Posterior vena cava (tissue), 2 donors: ENCODE measurements at regions of chr18 and their contacts with region 1.

Region 1: DNA sequence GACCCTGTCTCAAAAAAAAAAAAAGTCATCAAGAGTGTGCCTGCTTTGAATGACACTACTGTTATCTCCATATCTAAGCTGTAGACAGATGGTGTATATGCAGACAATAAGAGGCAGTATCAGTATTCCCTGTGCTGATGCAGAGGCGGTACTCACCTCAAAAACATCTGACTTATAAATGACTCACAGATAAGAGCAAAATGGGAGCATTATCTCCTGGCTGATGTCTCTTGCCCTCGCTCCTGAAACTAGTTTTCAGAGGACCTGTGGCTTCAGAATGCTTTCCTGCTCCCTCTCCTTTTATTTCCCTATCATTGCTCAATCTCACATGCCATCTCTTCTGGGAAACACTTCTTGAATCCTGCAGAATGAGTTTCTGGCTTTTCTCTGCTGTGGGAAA is 289.6 kb downstream of the PTPRM start:
- DNase-seq: no peak

Region 2: DNA sequence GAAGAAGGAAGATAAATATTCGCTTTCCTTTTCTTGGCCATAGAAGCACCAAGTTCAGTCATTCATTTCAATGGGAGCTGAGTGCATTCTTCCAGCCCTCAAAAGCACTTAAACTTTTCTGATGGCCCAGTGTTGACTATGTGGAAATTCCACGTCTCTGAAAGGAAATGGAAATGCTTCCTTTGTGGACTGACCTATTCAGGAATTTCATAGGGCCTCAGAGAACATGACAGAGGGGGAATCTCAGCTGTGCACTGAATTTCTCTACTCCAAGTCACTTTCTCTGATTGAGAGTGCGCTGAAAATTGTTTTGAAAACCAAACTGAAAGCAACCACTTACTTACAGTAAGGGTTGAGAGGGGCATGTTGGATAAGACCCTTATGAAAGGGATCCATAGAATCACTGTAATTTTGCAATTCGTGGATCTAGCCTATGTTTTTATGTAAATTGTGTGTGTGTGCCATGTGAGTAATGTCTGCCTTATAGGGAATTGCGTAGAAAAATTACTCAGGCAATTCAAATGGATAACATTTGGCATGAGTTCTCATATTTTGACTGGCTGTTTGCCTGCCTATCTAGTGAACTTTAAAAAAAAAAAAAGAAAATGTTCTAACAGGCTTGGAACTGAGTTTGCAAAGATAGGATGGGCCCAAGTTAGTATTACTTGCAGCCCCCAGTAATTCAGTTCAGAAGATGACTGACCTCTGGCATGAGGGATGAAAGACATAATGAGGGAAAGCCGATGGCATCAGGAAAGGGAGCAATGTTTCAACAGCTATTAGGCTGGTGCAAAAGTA is 147.3 kb after region 1 on chr18:
- intact Hi-C with region 1: loop called in 1 of 2 experiments (anchors 5 kb)
- DNase-seq: no peak